Caco-2 (cell line): ENCODE measurements at regions of chr11 and their contacts with region 1.

Region 1: GRCh38 chr11:130131961-130132850 is 27.4 kb upstream of the ST14 start:
- DNase-seq: peak; percentile 75 to 85
- H3K4me3 ChIP-seq: no peak overlapping the region
- H3K4me3 Mint-ChIP-seq: no peak overlapping the region
- H3K27ac Mint-ChIP-seq: peak overlapping the region; percentile 45
- H3K4me1 ChIP-seq: peaks cover 18% of the 10 kb centered on the region
- H3K4me1 Mint-ChIP-seq: peaks cover 25% of the 10 kb centered on the region
- H3K27me3 ChIP-seq: no peaks in the 10 kb centered on the region
- H3K27me3 Mint-ChIP-seq: no peaks in the 10 kb centered on the region
- CTCF ChIP-seq: peak; percentile 90 to 95

Region 2: GRCh38 chr11:129881570-129882170 is 250.5 kb before region 1 on chr11:
- CTCF ChIA-PET with region 1: interaction called, 32 read pairs
- POLR2A ChIA-PET with region 1: no interaction called
- intact Hi-C with region 1: loop called (anchors 1 kb)
- DNase-seq: peak; percentile 72 to 84
- H3K4me3 ChIP-seq: no peak overlapping the region
- H3K4me3 Mint-ChIP-seq: no peak overlapping the region
- H3K27ac Mint-ChIP-seq: no peak overlapping the region
- H3K4me1 ChIP-seq: no peaks in the 10 kb centered on the region
- H3K4me1 Mint-ChIP-seq: no peaks in the 10 kb centered on the region
- H3K27me3 ChIP-seq: no peaks in the 10 kb centered on the region
- H3K27me3 Mint-ChIP-seq: no peaks in the 10 kb centered on the region
- CTCF ChIP-seq: peak; percentile 94 to 96

Region 3: DNA sequence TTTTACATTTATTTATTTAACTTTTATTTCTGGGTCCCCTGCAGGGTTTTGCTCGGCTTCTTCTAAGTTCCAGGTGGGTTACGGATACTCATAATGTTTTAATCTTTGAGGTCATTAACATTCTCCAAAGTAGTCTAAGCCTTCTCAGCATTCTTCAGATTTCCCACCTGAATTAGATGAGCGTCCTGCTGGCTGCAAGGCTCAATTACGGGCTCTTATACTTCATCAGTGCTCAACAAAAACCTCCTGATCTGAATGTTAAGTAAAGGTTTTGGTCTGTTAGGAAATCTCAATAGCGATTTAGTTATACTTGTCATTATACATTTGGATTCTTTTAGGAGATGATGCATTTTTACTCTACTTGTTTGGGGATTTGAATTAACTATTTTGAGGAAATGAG is 209.5 kb before region 1 on chr11:
- CTCF ChIA-PET with region 1: interaction called, 73 read pairs
- POLR2A ChIA-PET with region 1: interaction called, 4 read pairs
- intact Hi-C with region 1: loop called (anchors 1 kb)
- DNase-seq: peak in 1 of 2 experiments; percentile 29
- H3K4me3 ChIP-seq: no peak overlapping the region
- H3K4me3 Mint-ChIP-seq: no peak overlapping the region
- H3K27ac Mint-ChIP-seq: no peak overlapping the region
- H3K4me1 ChIP-seq: peaks cover 5% of the 10 kb centered on the region
- H3K4me1 Mint-ChIP-seq: peaks cover 6% of the 10 kb centered on the region
- H3K27me3 ChIP-seq: no peaks in the 10 kb centered on the region
- H3K27me3 Mint-ChIP-seq: no peaks in the 10 kb centered on the region
- CTCF ChIP-seq: peak in 1 of 2 experiments; percentile 35

Region 4: DNA sequence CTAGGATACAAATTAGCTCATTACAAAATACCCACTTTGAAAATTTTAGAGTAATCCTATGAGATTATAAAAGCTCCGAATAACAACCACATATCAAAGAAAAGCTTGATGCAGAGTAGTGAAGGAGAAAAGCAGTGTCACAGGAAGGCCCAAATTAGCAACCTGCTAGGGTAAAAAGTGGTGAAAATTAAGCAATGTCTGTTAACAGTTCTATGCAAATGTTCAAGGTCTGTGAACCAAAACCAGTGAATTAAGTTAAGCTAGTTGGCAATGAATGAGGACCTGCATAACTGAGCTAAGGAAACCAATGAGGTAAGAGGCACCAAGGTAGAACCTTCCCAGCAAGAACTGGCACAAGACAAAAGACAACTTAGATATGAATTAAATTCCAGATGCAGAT is 159.1 kb before region 1 on chr11:
- CTCF ChIA-PET with region 1: interaction called, 23 read pairs
- POLR2A ChIA-PET with region 1: interaction called, 3 read pairs
- intact Hi-C with region 1: no loop called
- DNase-seq: no peak
- H3K4me3 ChIP-seq: no peak overlapping the region
- H3K4me3 Mint-ChIP-seq: no peak overlapping the region
- H3K27ac Mint-ChIP-seq: no peak overlapping the region
- H3K4me1 ChIP-seq: peaks cover 23% of the 10 kb centered on the region
- H3K4me1 Mint-ChIP-seq: peaks cover 34% of the 10 kb centered on the region
- H3K27me3 ChIP-seq: no peaks in the 10 kb centered on the region
- H3K27me3 Mint-ChIP-seq: no peaks in the 10 kb centered on the region
- CTCF ChIP-seq: no peak

Region 5: GRCh38 chr11:130069684-130070108 is 62.5 kb before region 1 on chr11 and contains the start of gene APLP2:
- CTCF ChIA-PET with region 1: interaction called, 17 read pairs
- POLR2A ChIA-PET with region 1: no interaction called
- intact Hi-C with region 1: loop called (anchors 1 kb)
- DNase-seq: peak; percentile 100
- H3K4me3 ChIP-seq: peak within 1 kb of the TSS; percentile 99
- H3K4me3 Mint-ChIP-seq: peak within 1 kb of the TSS; percentile 90
- H3K27ac Mint-ChIP-seq: peak within 1 kb of the TSS; percentile 91
- H3K4me1 ChIP-seq: peaks cover 41% of the 10 kb centered on the region
- H3K4me1 Mint-ChIP-seq: peaks cover 27% of the 10 kb centered on the region
- H3K27me3 ChIP-seq: no peaks in the 10 kb centered on the region
- H3K27me3 Mint-ChIP-seq: no peaks in the 10 kb centered on the region
- CTCF ChIP-seq: no peak
- total RNA-seq, gene APLP2: 1,761 and 2,076 TPM in 2 replicates

Region 6: GRCh38 chr11:130118636-130119387 is 13.4 kb before region 1 on chr11:
- CTCF ChIA-PET with region 1: interaction called, 10 read pairs
- POLR2A ChIA-PET with region 1: no interaction called
- intact Hi-C with region 1: no loop called
- DNase-seq: no peak
- H3K4me3 ChIP-seq: no peak overlapping the region
- H3K4me3 Mint-ChIP-seq: no peak overlapping the region
- H3K27ac Mint-ChIP-seq: peak overlapping the region; percentile 5
- H3K4me1 ChIP-seq: peaks cover 19% of the 10 kb centered on the region
- H3K4me1 Mint-ChIP-seq: peaks cover 39% of the 10 kb centered on the region
- H3K27me3 ChIP-seq: no peaks in the 10 kb centered on the region
- H3K27me3 Mint-ChIP-seq: no peaks in the 10 kb centered on the region
- CTCF ChIP-seq: no peak